Mammary epithelial cell (primary cell): ENCODE measurements at regions of chr1 and their contacts with region 1.

Region 1: GRCh38 chr1:44819608-44820327 is 11.4 kb downstream of the BTBD19 start:
- DNase-seq: peak; percentile 98
- H3K4me3 ChIP-seq: peak overlapping the region; percentile 4 to 47 (median 31)
- H3K27ac ChIP-seq: peak overlapping the region; percentile 94
- H3K4me1 ChIP-seq: peaks cover 24% of the 10 kb centered on the region
- H3K27me3 ChIP-seq: no peaks in the 10 kb centered on the region
- CTCF ChIP-seq: no peak

Region 2: GRCh38 chr1:44784094-44785028 is 35.4 kb before region 1 on chr1:
- CTCF ChIA-PET with region 1: no interaction called
- dilution Hi-C with region 1: no loop called
- in situ Hi-C with region 1: no loop called
- intact Hi-C with region 1: loop called (anchors 5 kb)
- DNase-seq: peak; percentile 49
- H3K4me3 ChIP-seq: peak overlapping the region in 2 of 3 experiments; percentile 23 to 37
- H3K27ac ChIP-seq: no peak overlapping the region
- H3K4me1 ChIP-seq: peaks cover 26% of the 10 kb centered on the region
- H3K27me3 ChIP-seq: no peaks in the 10 kb centered on the region
- CTCF ChIP-seq: peak; percentile 32 to 44

Region 3: GRCh38 chr1:44799770-44800584 is 19.8 kb before region 1 on chr1 and contains the start of gene PLK3:
- CTCF ChIA-PET with region 1: interaction called, 8 read pairs
- dilution Hi-C with region 1: no loop called
- in situ Hi-C with region 1: no loop called
- intact Hi-C with region 1: loop called (anchors 2 kb)
- DNase-seq: peak; percentile 98
- H3K4me3 ChIP-seq: peak within 1 kb of the TSS; percentile 33 to 89 (median 63)
- H3K27ac ChIP-seq: peak within 1 kb of the TSS; percentile 89
- H3K4me1 ChIP-seq: peaks cover 30% of the 10 kb centered on the region
- H3K27me3 ChIP-seq: no peaks in the 10 kb centered on the region
- CTCF ChIP-seq: peak; percentile 89 to 91
- total RNA-seq, gene PLK3: 53.5 to 101 TPM

Region 4: GRCh38 chr1:44807262-44808062 is 12.3 kb before region 1 on chr1 and contains the start of gene DYNLT4:
- CTCF ChIA-PET with region 1: no interaction called
- dilution Hi-C with region 1: no loop called
- in situ Hi-C with region 1: no loop called
- intact Hi-C with region 1: loop called (anchors 1 kb)
- DNase-seq: peak; percentile 99
- H3K4me3 ChIP-seq: no peak within 1 kb of the TSS
- H3K27ac ChIP-seq: peak within 1 kb of the TSS; percentile 97
- H3K4me1 ChIP-seq: peaks cover 81% of the 10 kb centered on the region
- H3K27me3 ChIP-seq: no peaks in the 10 kb centered on the region
- CTCF ChIP-seq: no peak
- total RNA-seq, gene DYNLT4: not detected

Region 5: DNA sequence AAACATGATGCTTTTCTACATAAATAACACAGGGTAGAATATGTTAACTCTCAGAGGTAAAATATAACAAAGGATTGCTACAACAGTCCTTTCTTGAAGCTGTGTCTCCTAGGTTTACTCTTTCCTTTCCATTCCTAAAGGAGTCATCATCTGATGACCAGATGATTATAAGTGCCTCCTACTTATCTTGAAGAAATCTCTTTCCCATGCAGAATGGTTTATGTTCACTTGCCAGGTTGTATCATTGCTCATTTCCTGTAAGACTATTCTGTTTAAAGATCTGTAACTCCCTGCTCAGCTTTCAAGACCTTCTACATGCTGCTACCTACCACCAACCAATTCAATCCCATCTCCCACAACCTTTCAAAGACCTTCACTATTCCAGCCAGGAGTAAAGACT is 74.8 kb after region 1 on chr1:
- CTCF ChIA-PET with region 1: no interaction called
- dilution Hi-C with region 1: no loop called
- in situ Hi-C with region 1: no loop called
- intact Hi-C with region 1: no loop called
- DNase-seq: peak; percentile 76
- H3K4me3 ChIP-seq: no peak overlapping the region
- H3K27ac ChIP-seq: no peak overlapping the region
- H3K4me1 ChIP-seq: peaks cover 4% of the 10 kb centered on the region
- H3K27me3 ChIP-seq: no peaks in the 10 kb centered on the region
- CTCF ChIP-seq: no peak

Region 6: DNA sequence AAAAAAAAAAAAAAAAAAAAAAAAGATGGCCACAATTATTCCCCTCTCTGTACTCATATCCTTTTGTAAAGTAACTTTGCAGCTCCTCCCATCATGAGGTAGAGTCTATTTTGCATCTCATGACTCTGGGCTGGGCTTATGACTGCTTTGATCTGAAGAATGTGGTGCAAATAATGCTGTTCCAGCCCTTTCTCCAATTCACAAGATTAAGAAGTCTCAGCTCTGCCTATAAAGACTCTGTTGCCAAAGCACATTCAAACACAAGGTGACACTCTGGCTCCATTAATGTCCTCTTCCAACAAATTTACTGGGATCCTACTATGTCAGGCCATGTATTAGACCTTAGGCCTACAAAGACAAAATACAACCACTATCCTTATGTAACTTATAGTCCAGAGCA is 88.1 kb after region 1 on chr1:
- CTCF ChIA-PET with region 1: no interaction called
- dilution Hi-C with region 1: no loop called
- in situ Hi-C with region 1: no loop called
- intact Hi-C with region 1: no loop called
- DNase-seq: no peak
- H3K4me3 ChIP-seq: no peak overlapping the region
- H3K27ac ChIP-seq: no peak overlapping the region
- H3K4me1 ChIP-seq: no peaks in the 10 kb centered on the region
- H3K27me3 ChIP-seq: no peaks in the 10 kb centered on the region
- CTCF ChIP-seq: no peak